B cell (primary cell): ENCODE measurements at regions of chr17 and their contacts with region 1.

Region 1: DNA sequence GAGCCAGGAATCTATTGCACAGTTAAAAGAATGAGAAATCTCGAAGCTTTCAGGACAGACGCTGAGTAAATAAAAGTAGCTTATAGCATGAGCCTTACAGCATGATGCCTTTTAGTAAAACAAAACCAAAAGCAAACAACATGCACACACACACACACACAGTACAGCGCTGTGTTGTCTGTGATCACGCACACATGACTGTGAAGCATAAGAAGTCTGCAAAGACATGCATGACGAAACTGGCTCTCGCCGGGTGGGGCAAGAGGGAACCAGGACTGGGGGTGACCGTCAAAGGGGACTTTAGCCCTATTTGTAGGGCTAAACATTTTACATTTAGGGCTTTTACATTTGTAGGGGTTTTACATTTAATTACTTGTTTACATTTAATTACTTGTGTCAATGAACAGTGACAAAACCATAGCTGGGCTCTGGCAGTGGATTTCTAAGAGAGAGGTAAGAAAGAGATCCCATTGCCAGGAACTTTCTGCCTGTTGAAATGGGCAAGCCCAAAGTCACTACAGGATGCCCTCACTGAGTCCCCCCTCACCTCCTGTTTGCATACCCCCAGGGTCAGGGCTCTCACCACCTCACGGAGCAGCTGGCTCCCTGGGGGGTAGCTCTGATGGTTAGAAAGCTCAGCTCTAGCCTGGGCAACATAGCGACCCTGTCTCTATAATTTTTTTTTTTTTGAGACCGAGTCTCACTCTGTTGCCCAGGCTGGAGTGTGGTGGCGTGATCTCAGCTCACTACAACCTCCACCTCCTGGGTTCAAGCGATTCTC is 2.0 kb upstream of the TNFRSF13B start:
- DNase-seq: peak; percentile 84
- ATAC-seq: peak; percentile 44
- H3K4me3 ChIP-seq: peak overlapping the region in 3 of 5 experiments; percentile 11 to 42 (median 30)
- H3K4me3 Mint-ChIP-seq: peak overlapping the region; percentile 91
- H3K27ac ChIP-seq: peak overlapping the region; percentile 71 to 88
- H3K27ac Mint-ChIP-seq: peak overlapping the region; percentile 90
- H3K4me1 ChIP-seq: peaks cover 83 to 99% of the 10 kb centered on the region in 2 donors
- H3K4me1 Mint-ChIP-seq: peaks cover 92% of the 10 kb centered on the region
- H3K27me3 ChIP-seq: no peaks in the 10 kb centered on the region
- H3K27me3 Mint-ChIP-seq: no peaks in the 10 kb centered on the region
- CTCF ChIP-seq: no peak

Region 2: GRCh38 chr17:16945663-16946218 is 28.2 kb before region 1 on chr17:
- CTCF ChIA-PET with region 1: interaction called, 3 read pairs
- POLR2A ChIA-PET with region 1: no interaction called
- intact Hi-C with region 1: loop called (anchors 2 kb)
- DNase-seq: no peak
- ATAC-seq: no peak
- H3K4me3 ChIP-seq: no peak overlapping the region
- H3K4me3 Mint-ChIP-seq: no peak overlapping the region
- H3K27ac ChIP-seq: no peak overlapping the region
- H3K27ac Mint-ChIP-seq: peak overlapping the region; percentile 79
- H3K4me1 ChIP-seq: peaks cover 23 to 54% of the 10 kb centered on the region in 2 donors
- H3K4me1 Mint-ChIP-seq: peaks cover 61% of the 10 kb centered on the region
- H3K27me3 ChIP-seq: no peaks in the 10 kb centered on the region
- H3K27me3 Mint-ChIP-seq: no peaks in the 10 kb centered on the region
- CTCF ChIP-seq: no peak

Region 3: GRCh38 chr17:17021194-17021863 is 47.4 kb after region 1 on chr17:
- CTCF ChIA-PET with region 1: no interaction called
- POLR2A ChIA-PET with region 1: no interaction called
- intact Hi-C with region 1: no loop called
- DNase-seq: no peak
- ATAC-seq: no peak
- H3K4me3 ChIP-seq: no peak overlapping the region
- H3K4me3 Mint-ChIP-seq: no peak overlapping the region
- H3K27ac ChIP-seq: no peak overlapping the region
- H3K27ac Mint-ChIP-seq: no peak overlapping the region
- H3K4me1 ChIP-seq: peaks cover 5 to 13% of the 10 kb centered on the region in 2 donors
- H3K4me1 Mint-ChIP-seq: peaks cover 13% of the 10 kb centered on the region
- H3K27me3 ChIP-seq: no peaks in the 10 kb centered on the region
- H3K27me3 Mint-ChIP-seq: no peaks in the 10 kb centered on the region
- CTCF ChIP-seq: no peak

Region 4: GRCh38 chr17:17067257-17067656 is 93.3 kb after region 1 on chr17:
- CTCF ChIA-PET with region 1: no interaction called
- POLR2A ChIA-PET with region 1: no interaction called
- intact Hi-C with region 1: no loop called
- DNase-seq: no peak
- ATAC-seq: no peak
- H3K4me3 ChIP-seq: no peak overlapping the region
- H3K4me3 Mint-ChIP-seq: no peak overlapping the region
- H3K27ac ChIP-seq: no peak overlapping the region
- H3K27ac Mint-ChIP-seq: no peak overlapping the region
- H3K4me1 ChIP-seq: peaks cover 21 to 23% of the 10 kb centered on the region in 2 donors
- H3K4me1 Mint-ChIP-seq: peaks cover 61% of the 10 kb centered on the region
- H3K27me3 ChIP-seq: no peaks in the 10 kb centered on the region
- H3K27me3 Mint-ChIP-seq: no peaks in the 10 kb centered on the region
- CTCF ChIP-seq: no peak

Region 5: GRCh38 chr17:17836250-17836817 is 862.4 kb after region 1 on chr17:
- CTCF ChIA-PET with region 1: no interaction called
- POLR2A ChIA-PET with region 1: no interaction called
- intact Hi-C with region 1: loop called (anchors 2 kb)
- DNase-seq: peak; percentile 98
- ATAC-seq: peak; percentile 69
- H3K4me3 ChIP-seq: peak overlapping the region; percentile 23 to 91 (median 89)
- H3K4me3 Mint-ChIP-seq: peak overlapping the region; percentile 88
- H3K27ac ChIP-seq: peak overlapping the region; percentile 93 to 97
- H3K27ac Mint-ChIP-seq: peak overlapping the region; percentile 91
- H3K4me1 ChIP-seq: peaks cover 45 to 64% of the 10 kb centered on the region in 2 donors
- H3K4me1 Mint-ChIP-seq: peaks cover 61% of the 10 kb centered on the region
- H3K27me3 ChIP-seq: no peaks in the 10 kb centered on the region
- H3K27me3 Mint-ChIP-seq: no peaks in the 10 kb centered on the region
- CTCF ChIP-seq: no peak